ENCODE measurements at regions of chr3 and their contacts with region 1.

Region 1: GRCh38 chr3:170078620-170079281 is 41.0 kb downstream of the GPR160 start:
- DNase-seq: peak; percentile 17
- H3K4me3 ChIP-seq: no peak overlapping the region
- H3K27ac ChIP-seq: no peak overlapping the region
- H3K4me1 ChIP-seq: peaks cover 14% of the 10 kb centered on the region
- H3K27me3 ChIP-seq: no peaks in the 10 kb centered on the region
- CTCF ChIP-seq: peak; percentile 35; the same call in 1 of the 2 replicates

Region 2: DNA sequence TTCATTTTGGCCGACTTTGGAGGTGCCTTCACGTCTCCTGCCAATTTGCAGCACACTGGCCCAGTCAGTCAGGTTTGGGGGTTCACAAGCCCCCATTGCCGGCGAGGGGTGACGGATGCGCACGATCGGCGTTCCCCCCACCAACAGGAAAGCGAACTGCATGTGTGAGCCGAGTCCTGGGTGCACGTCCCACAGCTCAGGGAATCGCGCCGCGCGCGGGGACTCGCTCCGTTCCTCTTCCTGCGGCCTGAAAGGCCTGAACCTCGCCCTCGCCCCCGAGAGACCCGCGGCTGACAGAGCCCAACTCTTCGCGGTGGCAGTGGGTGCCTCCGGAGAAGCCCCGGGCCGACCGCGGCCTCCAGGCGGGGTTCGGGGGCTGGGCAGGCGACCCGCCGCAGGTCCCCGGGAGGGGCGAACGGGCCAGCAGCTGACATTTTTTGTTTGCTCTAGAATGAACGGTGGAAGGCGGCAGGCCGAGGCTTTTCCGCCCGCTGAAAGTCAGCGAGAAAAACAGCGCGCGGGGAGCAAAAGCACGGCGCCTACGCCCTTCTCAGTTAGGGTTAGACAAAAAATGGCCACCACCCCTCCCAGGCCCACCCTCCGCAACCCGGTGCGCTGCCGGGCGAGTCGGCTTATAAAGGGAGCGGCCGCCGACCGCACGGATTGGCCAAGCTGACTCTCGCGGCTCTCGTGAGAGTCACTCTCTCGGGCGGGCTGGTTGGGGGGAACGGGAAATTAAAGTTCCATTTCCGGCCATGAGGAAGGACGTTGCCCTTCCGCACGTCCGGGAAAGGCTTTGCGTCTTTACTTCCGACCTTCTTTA is 314.1 kb before region 1 on chr3 and contains the start of gene TERC:
- CTCF ChIA-PET with region 1: no interaction called
- POLR2A ChIA-PET with region 1: no interaction called
- intact Hi-C with region 1: no loop called
- DNase-seq: peak; percentile 92
- H3K4me3 ChIP-seq: peak within 1 kb of the TSS; percentile 73
- H3K27ac ChIP-seq: peak within 1 kb of the TSS; percentile 90
- H3K4me1 ChIP-seq: no peaks in the 10 kb centered on the region
- H3K27me3 ChIP-seq: no peaks in the 10 kb centered on the region
- CTCF ChIP-seq: no peak
- total RNA-seq, gene TERC: 5.8 and 16.7 TPM in 2 replicates

Region 3: DNA sequence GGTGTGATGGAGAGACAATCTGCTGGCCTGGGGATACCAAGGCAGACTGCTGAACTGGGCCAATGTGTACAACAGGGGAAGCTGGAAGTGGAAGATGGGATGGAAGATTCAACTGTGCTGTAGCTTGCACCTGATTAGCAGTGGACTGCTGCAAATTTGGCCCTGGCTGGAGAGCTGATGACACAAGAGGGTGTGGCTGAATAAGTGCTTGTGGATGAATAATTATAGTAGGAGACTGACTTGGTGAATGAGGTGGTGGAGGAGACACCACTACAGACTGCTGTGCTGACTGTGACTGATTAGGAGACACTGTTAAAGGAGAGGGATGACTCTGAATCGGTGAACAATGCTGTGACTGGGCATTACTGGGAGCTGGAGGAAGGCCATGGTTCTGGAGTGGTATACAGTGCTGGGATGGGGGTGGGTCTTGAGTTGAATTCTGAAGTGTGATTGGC is 50.3 kb after region 1 on chr3:
- CTCF ChIA-PET with region 1: no interaction called
- POLR2A ChIA-PET with region 1: no interaction called
- intact Hi-C with region 1: loop called (anchors 2 kb)
- DNase-seq: peak; percentile 24
- H3K4me3 ChIP-seq: no peak overlapping the region
- H3K27ac ChIP-seq: peak overlapping the region; percentile 61
- H3K4me1 ChIP-seq: peaks cover 33% of the 10 kb centered on the region
- H3K27me3 ChIP-seq: no peaks in the 10 kb centered on the region
- CTCF ChIP-seq: no peak

Measured in A673 (cell line).